Activated T-helper 1 cell treated with anti-CD3 and anti-CD28 coated beads, Interleukin-12 subunit alpha, Interleukin-12 subunit beta, Interleukin-2, Interleukin-4 antibody, amounts not matched to agents 30 ng/mL and 10 ng/mL and 1 ng/mL, durations not matched to agents 14 hours and 24 hours and 36 hours (primary cell): ENCODE measurements at regions of chr10 and their contacts with region 1.

Region 1: GRCh38 chr10:58660577-58661255 is 148.0 kb downstream of the BICC1 start:
- DNase-seq: no peak
- H3K4me3 Mint-ChIP-seq: no peak overlapping the region
- H3K27ac Mint-ChIP-seq: no peak overlapping the region
- H3K4me1 Mint-ChIP-seq: no peaks in the 10 kb centered on the region
- H3K27me3 Mint-ChIP-seq: no peaks in the 10 kb centered on the region

Region 2: GRCh38 chr10:58625070-58625469 is 35.6 kb before region 1 on chr10:
- intact Hi-C with region 1: loop called (anchors 1 kb)
- DNase-seq: no peak
- H3K4me3 Mint-ChIP-seq: no peak overlapping the region
- H3K27ac Mint-ChIP-seq: no peak overlapping the region
- H3K4me1 Mint-ChIP-seq: no peaks in the 10 kb centered on the region
- H3K27me3 Mint-ChIP-seq: peaks cover 2% of the 10 kb centered on the region

Region 3: GRCh38 chr10:58698777-58699356 is 38.2 kb after region 1 on chr10:
- intact Hi-C with region 1: no loop called
- DNase-seq: no peak
- H3K4me3 Mint-ChIP-seq: no peak overlapping the region
- H3K27ac Mint-ChIP-seq: no peak overlapping the region
- H3K4me1 Mint-ChIP-seq: no peaks in the 10 kb centered on the region
- H3K27me3 Mint-ChIP-seq: no peaks in the 10 kb centered on the region